Sigmoid colon (tissue), 7 donors: ENCODE measurements at regions of chrX and their contacts with region 1.

Region 1: DNA sequence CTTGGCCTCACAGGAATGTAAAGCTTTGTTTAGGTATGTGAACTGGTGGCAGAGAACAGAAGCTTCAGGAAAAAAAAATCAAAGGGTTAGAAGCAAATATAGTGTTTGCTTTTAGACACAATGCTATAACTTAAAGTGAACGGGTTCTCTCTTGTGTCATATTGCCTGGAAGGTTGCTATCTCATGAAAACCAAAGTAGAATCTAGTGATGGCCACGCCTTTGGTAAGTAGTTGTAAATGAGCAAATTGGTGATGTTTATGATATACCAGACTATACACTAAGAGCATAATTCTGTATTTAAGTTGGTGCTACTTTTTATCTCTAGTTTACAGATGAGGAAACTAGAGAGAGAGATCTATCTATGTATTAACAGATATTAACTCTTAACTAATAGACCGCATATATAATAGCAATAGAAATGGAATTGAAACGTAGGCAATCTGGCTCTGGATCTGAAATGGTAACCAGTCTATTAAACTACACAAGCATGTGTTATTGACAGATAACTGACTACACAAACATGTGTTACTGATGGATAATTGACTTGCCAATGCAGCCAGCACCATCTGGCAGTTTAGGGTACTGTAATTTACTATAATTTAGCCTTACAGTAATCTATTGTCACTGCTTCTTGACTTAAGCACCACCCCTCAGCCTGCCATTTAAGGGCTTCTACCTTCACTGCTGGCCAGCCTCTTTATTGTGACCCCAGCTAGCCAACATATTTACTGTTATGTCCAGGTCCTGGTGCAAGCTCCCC is 40.8 kb downstream of the HCCS start:
- DNase-seq: no peak
- H3K4me3 ChIP-seq: no peak overlapping the region
- H3K27ac ChIP-seq: peak overlapping the region in 1 of 4 donors; percentile 6
- H3K4me1 ChIP-seq: peaks cover 0 to 17% (median 0%) of the 10 kb centered on the region in 4 donors
- H3K27me3 ChIP-seq: no peaks in the 10 kb centered on the region
- CTCF ChIP-seq: no peak
- EP300 ChIP-seq: no peak
- POLR2A ChIP-seq: no peak

Region 2: DNA sequence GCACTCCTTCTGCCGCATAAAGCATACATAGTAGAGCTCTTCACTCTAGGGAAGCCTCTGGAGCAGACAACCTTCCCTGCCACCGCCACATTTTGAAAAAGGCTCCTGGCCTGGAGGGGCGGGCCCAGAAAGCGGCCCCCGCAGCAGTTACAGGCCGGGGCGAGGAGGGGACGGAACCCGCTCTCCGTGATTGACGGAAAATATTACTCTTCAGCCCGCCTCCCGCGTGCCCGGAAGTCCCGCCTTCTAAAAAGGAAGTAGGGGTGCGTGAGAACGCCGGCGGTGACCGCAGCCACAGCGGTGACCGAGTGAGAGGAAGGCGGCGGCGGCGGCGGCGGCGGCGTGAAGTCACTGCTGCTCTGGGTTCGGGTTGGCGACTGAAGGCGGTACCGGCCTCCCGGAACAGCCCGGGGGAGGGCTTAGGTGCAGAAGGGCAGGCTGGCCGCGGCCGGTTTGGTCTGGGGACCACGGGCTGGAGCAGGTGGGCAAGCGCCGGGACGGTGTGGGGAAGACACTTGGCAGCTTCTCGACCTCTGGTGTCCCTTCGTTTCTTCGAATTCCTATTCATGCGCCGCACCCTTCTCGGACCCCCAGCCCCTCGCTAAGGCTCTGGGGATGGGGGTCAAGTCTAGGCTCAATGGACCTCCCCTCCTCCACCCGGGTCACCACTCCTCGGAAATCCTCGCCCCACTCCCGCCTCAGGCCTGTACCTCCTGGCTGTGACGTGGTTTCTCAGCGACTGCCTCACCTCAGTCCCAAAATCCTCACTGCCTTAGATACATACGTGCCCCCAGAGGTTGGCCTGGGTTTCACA is 40.7 kb before region 1 on chrX and contains the start of gene HCCS:
- intact Hi-C with region 1: no loop called
- DNase-seq: peak; percentile 93
- H3K4me3 ChIP-seq: peak within 1 kb of the TSS; percentile 61 to 75 (median 66)
- H3K27ac ChIP-seq: peak within 1 kb of the TSS; percentile 81 to 92 (median 82)
- H3K4me1 ChIP-seq: peaks cover 0 to 30% (median 14%) of the 10 kb centered on the region in 4 donors
- H3K27me3 ChIP-seq: no peaks in the 10 kb centered on the region
- CTCF ChIP-seq: no peak
- EP300 ChIP-seq: no peak
- POLR2A ChIP-seq: peak; percentile 71 to 75
- total RNA-seq, gene HCCS: 13.3 to 20.7 (median 16.1) TPM

Region 3: DNA sequence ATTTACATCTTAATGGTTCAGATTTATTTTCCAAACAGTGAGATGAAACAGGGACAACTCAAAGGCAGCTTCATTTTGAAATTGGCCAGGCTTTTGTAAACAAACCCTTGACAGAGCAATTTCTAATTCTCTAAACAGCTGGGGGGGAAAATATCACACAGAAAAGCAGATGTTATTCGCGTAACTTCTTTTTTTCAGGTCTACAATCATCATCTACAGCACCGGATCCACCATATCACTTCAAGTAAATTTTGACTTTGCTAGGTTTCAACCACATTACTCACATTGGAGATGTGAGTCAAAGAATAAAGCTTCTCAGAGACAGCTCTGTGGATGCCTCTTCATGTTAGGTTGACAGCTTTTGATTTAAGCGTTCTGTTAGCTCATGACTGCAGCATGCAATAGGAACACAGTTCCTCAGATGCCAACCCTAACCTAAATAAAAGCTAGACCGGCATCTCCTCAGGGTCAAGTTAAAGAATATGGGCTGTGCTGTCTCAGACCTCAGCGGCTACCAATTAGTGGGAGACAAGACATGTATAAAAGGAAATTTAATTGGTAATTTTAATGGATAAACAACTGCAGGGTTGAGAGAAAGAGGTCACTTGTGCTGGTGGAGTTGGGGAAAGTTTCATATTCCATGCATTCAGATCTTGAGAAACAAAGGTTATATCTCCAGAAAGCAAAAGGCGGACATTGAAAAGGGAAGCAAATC is 168.0 kb after region 1 on chrX:
- intact Hi-C with region 1: loop called (anchors 5 kb)
- DNase-seq: no peak
- H3K4me3 ChIP-seq: no peak overlapping the region
- H3K27ac ChIP-seq: peak overlapping the region in 2 of 4 donors; percentile 25 to 50
- H3K4me1 ChIP-seq: peaks cover 0 to 24% (median 4%) of the 10 kb centered on the region in 4 donors
- H3K27me3 ChIP-seq: no peaks in the 10 kb centered on the region
- CTCF ChIP-seq: no peak
- EP300 ChIP-seq: no peak
- POLR2A ChIP-seq: no peak

Region 4: DNA sequence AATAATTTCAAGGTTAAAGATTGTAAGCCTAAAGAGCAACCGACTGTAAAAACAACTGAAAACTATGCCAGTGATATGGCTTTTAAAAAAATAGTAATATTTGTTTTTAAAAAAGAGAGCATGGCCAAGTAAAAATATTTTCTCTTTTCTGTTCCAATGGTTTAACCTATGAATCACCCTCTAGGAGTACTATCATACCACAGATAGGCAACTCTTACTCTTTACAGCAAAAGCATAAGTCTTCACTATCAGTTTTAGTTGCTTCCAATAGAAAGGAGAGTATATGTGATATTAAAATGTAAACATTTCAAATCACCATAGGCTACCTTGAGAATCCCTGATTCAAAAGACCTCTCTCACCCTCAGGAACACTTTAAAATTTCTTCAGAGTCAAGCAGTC is 243.9 kb after region 1 on chrX:
- intact Hi-C with region 1: no loop called
- DNase-seq: no peak
- H3K4me3 ChIP-seq: no peak overlapping the region
- H3K27ac ChIP-seq: no peak overlapping the region
- H3K4me1 ChIP-seq: peaks cover 0 to 43% (median 6%) of the 10 kb centered on the region in 4 donors
- H3K27me3 ChIP-seq: no peaks in the 10 kb centered on the region
- CTCF ChIP-seq: no peak
- EP300 ChIP-seq: no peak
- POLR2A ChIP-seq: no peak